Activated T-helper 1 cell treated with anti-CD3 and anti-CD28 coated beads, Interleukin-12 subunit alpha, Interleukin-12 subunit beta, Interleukin-2, Interleukin-4 antibody, amounts not matched to agents 30 ng/mL and 10 ng/mL and 1 ng/mL, durations not matched to agents 14 hours and 24 hours and 36 hours (primary cell): ENCODE measurements at regions of chr18 and their contacts with region 1.

Region 1: GRCh38 chr18:59927246-59927825 is 27.5 kb downstream of the PMAIP1 start:
- DNase-seq: no peak
- H3K4me3 Mint-ChIP-seq: peak overlapping the region; percentile 13
- H3K27ac Mint-ChIP-seq: peak overlapping the region; percentile 88
- H3K4me1 Mint-ChIP-seq: peaks cover 47% of the 10 kb centered on the region
- H3K27me3 Mint-ChIP-seq: no peaks in the 10 kb centered on the region

Region 2: DNA sequence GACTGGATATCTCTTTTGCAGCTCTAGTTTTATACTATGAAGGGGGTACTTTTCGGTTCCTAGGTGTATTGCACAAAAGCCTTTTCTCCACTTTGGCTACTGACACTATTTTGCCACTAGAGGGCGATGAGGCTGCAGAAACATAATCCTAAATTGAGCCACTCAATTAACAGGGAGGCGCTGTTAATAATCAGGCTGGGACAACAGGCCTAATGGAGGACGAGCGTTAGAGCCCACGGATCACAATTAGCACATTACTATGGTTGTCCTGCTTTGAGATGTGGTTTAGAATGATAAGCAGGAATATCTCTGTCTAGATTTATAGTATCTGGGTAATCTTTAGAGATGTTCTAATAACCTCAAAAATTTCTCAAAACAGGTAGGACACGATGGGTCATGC is 89.8 kb before region 1 on chr18:
- intact Hi-C with region 1: loop called (anchors 1 kb)
- DNase-seq: peak; percentile 34
- H3K4me3 Mint-ChIP-seq: no peak overlapping the region
- H3K27ac Mint-ChIP-seq: no peak overlapping the region
- H3K4me1 Mint-ChIP-seq: peaks cover 20% of the 10 kb centered on the region
- H3K27me3 Mint-ChIP-seq: peaks cover 14% of the 10 kb centered on the region

Region 3: DNA sequence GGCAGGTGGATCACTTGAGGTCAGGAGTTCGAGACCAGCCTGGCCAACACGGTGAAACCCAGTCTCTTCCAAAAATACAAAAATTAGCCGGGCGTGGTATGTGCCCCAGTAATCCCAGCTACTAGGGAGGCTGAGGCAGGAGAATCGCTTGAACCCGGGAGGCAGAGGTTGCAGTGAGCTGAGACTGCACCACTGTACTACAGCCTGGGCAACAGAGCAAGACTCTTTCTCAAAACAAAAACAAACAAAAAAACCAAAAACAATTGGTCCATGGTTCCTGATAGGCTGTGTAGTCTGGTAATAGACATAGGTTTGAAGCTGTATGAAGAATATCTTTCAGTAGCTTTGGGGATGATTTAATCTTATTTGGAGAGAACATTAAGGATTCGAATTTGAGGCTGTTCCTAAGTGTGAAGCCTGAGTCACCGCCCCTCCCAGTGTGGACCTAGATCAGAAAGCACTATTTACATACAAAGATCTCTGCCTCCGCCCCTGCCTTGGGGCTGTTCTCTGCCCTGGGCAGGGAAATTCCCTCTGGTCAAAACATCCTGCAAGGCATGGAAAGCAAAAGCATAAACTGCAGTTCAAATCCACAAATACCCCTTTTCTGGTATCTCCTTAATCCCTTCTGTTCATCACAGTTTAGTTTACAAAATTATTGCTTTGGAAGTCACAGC is 80.4 kb before region 1 on chr18:
- intact Hi-C with region 1: loop called (anchors 1 kb)
- DNase-seq: peak; percentile 61
- H3K4me3 Mint-ChIP-seq: no peak overlapping the region
- H3K27ac Mint-ChIP-seq: peak overlapping the region; percentile 89
- H3K4me1 Mint-ChIP-seq: peaks cover 21% of the 10 kb centered on the region
- H3K27me3 Mint-ChIP-seq: peaks cover 3% of the 10 kb centered on the region

Region 4: DNA sequence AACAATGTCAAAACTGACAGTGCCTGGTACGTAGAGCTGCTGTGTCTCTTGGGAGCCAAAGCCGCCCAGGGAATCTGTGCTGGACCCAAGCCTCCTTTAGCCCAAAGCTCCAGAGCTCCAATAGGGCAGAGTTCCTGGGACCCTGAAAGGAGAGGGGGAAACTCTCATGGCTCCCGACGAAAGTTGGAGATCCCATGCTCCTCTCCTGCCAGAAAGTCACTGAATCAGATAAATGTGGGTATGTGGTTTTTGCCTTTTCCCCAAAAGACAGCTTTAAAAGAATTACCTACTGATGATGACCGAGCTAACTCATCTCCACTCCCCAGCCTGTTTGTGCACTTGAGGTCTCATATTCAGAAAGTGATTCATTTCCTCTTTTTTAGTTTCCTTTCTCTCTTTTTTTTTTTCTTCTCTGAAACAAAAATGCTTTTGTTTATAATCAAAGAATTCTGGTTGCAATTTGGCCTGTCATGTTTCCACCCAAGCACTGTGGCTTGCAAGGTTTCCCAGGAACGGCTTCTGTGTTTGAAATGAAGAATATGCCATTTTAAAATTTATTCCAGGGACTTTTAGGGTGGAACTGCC is 41.7 kb before region 1 on chr18:
- intact Hi-C with region 1: loop called (anchors 1 kb)
- DNase-seq: peak; percentile 38
- H3K4me3 Mint-ChIP-seq: peak overlapping the region; percentile 8
- H3K27ac Mint-ChIP-seq: peak overlapping the region; percentile 72
- H3K4me1 Mint-ChIP-seq: peaks cover 47% of the 10 kb centered on the region
- H3K27me3 Mint-ChIP-seq: no peaks in the 10 kb centered on the region

Region 5: DNA sequence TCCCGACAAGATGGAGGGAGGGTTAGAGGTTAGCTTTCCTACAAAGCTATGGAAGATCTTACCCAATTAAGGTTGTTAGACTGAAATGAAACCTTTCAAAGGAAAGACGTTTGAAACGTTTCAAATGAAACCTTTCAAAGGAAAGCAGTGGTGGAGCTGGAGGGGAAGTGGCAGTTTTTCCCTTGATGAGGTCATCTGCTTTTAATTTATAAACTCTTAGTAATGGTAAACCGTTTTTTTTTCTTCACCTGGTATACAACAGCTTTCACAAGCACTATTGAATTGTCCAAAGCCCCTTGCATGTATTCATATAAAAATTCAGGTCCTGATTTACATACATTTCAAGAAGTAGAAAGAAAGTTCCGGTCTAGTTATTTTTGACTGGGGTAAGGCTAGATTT is 20.2 kb before region 1 on chr18:
- intact Hi-C with region 1: loop called (anchors 1 kb)
- DNase-seq: no peak
- H3K4me3 Mint-ChIP-seq: peak overlapping the region; percentile 50
- H3K27ac Mint-ChIP-seq: peak overlapping the region; percentile 84
- H3K4me1 Mint-ChIP-seq: peaks cover 77% of the 10 kb centered on the region
- H3K27me3 Mint-ChIP-seq: no peaks in the 10 kb centered on the region

Region 6: DNA sequence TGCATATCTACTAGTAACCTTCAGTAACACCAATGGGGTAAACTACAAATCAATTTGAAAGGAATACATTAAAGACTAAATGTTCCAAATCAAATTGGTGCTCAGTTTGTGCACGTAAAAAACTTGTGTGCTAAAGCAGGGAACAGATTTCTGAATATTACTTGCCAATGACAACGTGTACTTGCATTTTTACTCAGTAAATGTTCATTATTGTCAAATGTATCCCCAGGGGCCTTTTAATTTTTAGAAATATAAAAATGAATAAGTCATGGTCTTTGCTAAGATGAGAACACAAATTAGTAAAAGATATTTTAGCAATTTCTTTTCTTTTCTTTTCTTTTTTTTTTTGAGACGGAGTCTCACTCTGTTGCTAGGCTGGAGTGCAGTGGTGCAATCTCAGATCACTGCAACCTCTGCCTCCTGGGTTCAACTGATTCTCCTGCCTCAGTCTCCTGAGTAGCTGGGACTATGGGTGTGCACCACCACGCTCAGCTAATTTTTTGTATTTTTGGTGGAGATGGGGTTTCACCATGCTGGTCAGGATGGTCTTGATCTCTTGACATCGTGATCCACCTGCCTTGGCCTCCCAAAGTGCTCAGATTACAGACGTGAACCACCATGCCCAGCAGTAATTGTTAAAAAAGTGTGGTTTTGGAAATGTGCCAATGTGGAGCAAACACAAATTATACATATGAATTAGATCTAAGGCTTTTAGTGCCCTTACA is 25.1 kb after region 1 on chr18:
- intact Hi-C with region 1: loop called (anchors 1 kb)
- DNase-seq: no peak
- H3K4me3 Mint-ChIP-seq: no peak overlapping the region
- H3K27ac Mint-ChIP-seq: no peak overlapping the region
- H3K4me1 Mint-ChIP-seq: peaks cover 17% of the 10 kb centered on the region
- H3K27me3 Mint-ChIP-seq: no peaks in the 10 kb centered on the region